ENCODE measurements at regions of chr9 and their contacts with region 1.

Region 1: GRCh38 chr9:131320031-131320685 is 30.6 kb downstream of the PLPP7 start:
- DNase-seq: peak; percentile 66 to 87 (median 84)
- ATAC-seq: peak; percentile 61 to 80
- H3K4me3 ChIP-seq: no peak overlapping the region
- H3K27ac ChIP-seq: no peak overlapping the region
- H3K4me1 ChIP-seq: no peaks in the 10 kb centered on the region
- H3K27me3 ChIP-seq: no peaks in the 10 kb centered on the region

Region 2: GRCh38 chr9:131253891-131254491 is 66.2 kb before region 1 on chr9:
- intact Hi-C with region 1: loop called in 1 of 4 experiments (anchors 10 kb)
- DNase-seq: peak; percentile 65 to 85 (median 84)
- ATAC-seq: peak; percentile 71 to 73
- H3K4me3 ChIP-seq: no peak overlapping the region
- H3K27ac ChIP-seq: peak overlapping the region; percentile 85
- H3K4me1 ChIP-seq: peaks cover 13% of the 10 kb centered on the region
- H3K27me3 ChIP-seq: no peaks in the 10 kb centered on the region

Region 3: GRCh38 chr9:131370638-131371037 is 50.5 kb after region 1 on chr9:
- intact Hi-C with region 1: no loop called
- DNase-seq: no peak
- ATAC-seq: no peak
- H3K4me3 ChIP-seq: no peak overlapping the region
- H3K27ac ChIP-seq: no peak overlapping the region
- H3K4me1 ChIP-seq: no peaks in the 10 kb centered on the region
- H3K27me3 ChIP-seq: no peaks in the 10 kb centered on the region